IMR-90 (cell line): ENCODE measurements at regions of chr3 and their contacts with region 1.

Region 1: GRCh38 chr3:177705976-177706823 is 508.9 kb upstream of the TBL1XR1 start:
- DNase-seq: no peak
- ATAC-seq: no peak
- H3K4me3 ChIP-seq: no peak overlapping the region
- H3K27ac ChIP-seq: no peak overlapping the region
- H3K4me1 ChIP-seq: no peaks in the 10 kb centered on the region
- H3K27me3 ChIP-seq: no peaks in the 10 kb centered on the region
- CTCF ChIP-seq: no peak
- POLR2A ChIP-seq: no peak
- RAD21 ChIP-seq: no peak

Region 2: GRCh38 chr3:177729956-177730681 is 23.9 kb after region 1 on chr3:
- CTCF ChIA-PET with region 1: no interaction called
- POLR2A ChIA-PET with region 1: no interaction called
- dilution Hi-C with region 1: no loop called
- in situ Hi-C with region 1: no loop called
- intact Hi-C with region 1: loop called (anchors 1 kb)
- DNase-seq: no peak
- ATAC-seq: no peak
- H3K4me3 ChIP-seq: no peak overlapping the region
- H3K27ac ChIP-seq: peak overlapping the region; percentile 34; the same call in 1 of the 2 replicates
- H3K4me1 ChIP-seq: peaks cover 9% of the 10 kb centered on the region
- H3K27me3 ChIP-seq: no peaks in the 10 kb centered on the region
- CTCF ChIP-seq: no peak
- POLR2A ChIP-seq: no peak
- RAD21 ChIP-seq: no peak